Tibial artery (tissue), 4 donors: ENCODE measurements at regions of chr13 and their contacts with region 1.

Region 1: DNA sequence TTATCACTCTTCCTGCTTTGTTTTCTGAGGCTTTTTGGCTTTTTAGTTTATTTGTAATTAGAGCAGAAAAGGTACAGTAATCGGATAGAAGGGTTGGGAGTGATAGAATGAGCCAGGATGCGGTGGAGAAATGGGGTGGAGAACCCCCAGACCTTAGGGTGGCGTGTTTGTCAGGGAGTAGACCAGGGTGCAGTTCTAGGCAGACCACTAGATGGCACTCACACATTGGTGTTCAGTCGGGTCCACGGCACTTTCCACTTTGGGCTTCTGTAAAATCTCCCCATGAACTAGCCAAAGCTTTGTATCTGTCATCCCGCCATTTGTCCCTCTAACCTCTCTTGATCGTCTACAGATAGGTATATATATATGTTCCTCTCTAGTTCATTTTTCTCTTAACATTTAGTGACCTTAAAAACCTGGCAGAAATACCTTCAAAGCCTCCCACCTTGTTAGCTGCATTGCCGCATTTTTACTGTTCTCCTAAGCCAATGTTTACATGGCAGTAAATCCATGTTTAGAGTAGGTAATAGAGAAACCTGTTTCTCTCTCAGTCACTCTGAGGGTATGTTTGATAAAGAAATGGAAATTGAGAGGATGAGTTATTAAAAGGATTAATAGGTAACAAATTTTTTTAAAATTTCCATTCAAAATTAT is 154.9 kb downstream of the TM9SF2 start:
- DNase-seq: peak; percentile 80 to 88
- H3K4me3 ChIP-seq: no peak overlapping the region
- H3K27ac ChIP-seq: no peak overlapping the region
- H3K4me1 ChIP-seq: peaks cover 0 to 20% (median 15%) of the 10 kb centered on the region in 4 donors
- H3K27me3 ChIP-seq: no peaks in the 10 kb centered on the region
- CTCF ChIP-seq: peak; percentile 79 to 91

Region 2: GRCh38 chr13:99617474-99618255 is 38.6 kb before region 1 on chr13:
- intact Hi-C with region 1: loop called (anchors 5 kb)
- DNase-seq: peak; percentile 46 to 76
- H3K4me3 ChIP-seq: no peak overlapping the region
- H3K27ac ChIP-seq: peak overlapping the region in 1 of 2 donors; percentile 54
- H3K4me1 ChIP-seq: peaks cover 0 to 37% (median 18%) of the 10 kb centered on the region in 4 donors
- H3K27me3 ChIP-seq: no peaks in the 10 kb centered on the region
- CTCF ChIP-seq: peak; percentile 78 to 85

Region 3: GRCh38 chr13:99916366-99917103 is 260.3 kb after region 1 on chr13:
- intact Hi-C with region 1: loop called (anchors 10 kb)
- DNase-seq: no peak
- H3K4me3 ChIP-seq: no peak overlapping the region
- H3K27ac ChIP-seq: no peak overlapping the region
- H3K4me1 ChIP-seq: no peaks in the 10 kb centered on the region
- H3K27me3 ChIP-seq: peaks cover 0 to 18% of the 10 kb centered on the region in 2 donors
- CTCF ChIP-seq: peak; percentile 84 to 86

Region 4: DNA sequence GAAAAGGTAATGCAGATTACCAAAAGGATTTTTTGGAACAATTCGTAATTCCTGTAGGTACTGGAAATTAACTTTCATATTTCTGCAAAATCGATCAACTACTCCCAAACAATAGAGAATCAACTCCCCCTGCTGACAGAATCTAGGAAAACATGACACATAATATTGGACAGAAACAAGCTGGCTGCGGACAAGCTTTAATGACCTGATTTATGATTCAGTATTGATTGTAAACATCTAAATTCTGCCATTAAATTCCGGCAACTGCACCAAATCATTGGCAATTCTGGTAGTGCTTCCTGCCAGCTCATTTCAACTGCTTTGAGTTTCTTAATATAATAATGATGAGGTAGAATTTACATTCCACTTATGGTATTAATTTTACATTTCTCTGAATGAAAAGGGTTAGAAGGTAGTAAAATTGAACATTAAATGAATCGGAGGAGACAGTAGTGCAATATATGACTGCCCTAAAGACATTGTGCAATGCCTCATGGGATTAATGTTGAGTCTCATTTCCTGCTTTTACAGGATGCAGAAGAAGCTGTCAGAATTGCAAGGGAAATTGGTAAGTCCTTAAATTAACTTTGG is 579.2 kb after region 1 on chr13:
- intact Hi-C with region 1: loop called (anchors 10 kb)
- DNase-seq: no peak
- H3K4me3 ChIP-seq: no peak overlapping the region
- H3K27ac ChIP-seq: no peak overlapping the region
- H3K4me1 ChIP-seq: peaks cover 0 to 14% (median 0%) of the 10 kb centered on the region in 4 donors
- H3K27me3 ChIP-seq: no peaks in the 10 kb centered on the region
- CTCF ChIP-seq: peak; percentile 49 to 59